Naive thymus-derived CD8-positive, alpha-beta T cell (primary cell): ENCODE measurements at regions of chr7 and their contacts with region 1.

Region 1: DNA sequence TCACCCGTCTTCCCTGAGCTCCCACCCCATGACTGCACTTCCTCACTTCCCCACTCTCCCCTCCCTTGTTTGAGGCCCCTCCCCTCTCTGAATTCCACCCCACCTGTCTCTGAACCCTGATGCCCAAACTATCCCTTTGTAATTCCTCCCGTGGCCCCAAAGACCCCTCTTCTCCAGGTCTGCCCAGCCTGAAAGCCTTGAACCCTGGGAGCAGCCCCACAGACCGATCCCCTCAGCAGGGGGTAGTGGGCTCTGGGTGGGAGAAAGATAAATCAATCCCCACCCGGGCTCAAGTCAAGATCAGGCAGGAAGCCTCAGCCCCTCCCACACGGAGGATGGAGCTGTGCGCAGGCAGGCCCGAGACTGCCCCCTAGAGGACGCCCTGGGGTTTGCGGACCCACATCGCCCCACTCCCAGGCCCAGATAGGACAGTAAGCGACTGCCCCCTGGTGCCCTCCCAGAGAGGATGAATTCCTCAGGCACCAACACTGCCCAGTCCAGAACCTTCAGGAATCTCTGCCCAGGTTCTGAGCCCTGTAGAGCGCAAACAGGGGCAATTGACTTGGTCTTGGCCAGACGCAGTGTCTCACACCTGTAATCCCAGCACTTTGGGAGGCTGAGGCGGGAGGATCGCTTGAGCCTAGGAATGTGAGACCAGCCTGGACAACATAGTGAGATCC is 11.7 kb downstream of the HSPB1 start:
- DNase-seq: peak; percentile 89 to 97 (median 95)
- ATAC-seq: peak; percentile 50 to 62
- H3K4me3 Mint-ChIP-seq: peak overlapping the region in 6 of 10 donors; percentile 14 to 61 (median 40)
- H3K27ac Mint-ChIP-seq: peak overlapping the region in 3 of 10 donors; percentile 6 to 67 (median 48)
- H3K4me1 Mint-ChIP-seq: peaks cover 17 to 30% (median 23%) of the 10 kb centered on the region in 4 donors
- H3K27me3 Mint-ChIP-seq: no peaks in the 10 kb centered on the region

Region 2: DNA sequence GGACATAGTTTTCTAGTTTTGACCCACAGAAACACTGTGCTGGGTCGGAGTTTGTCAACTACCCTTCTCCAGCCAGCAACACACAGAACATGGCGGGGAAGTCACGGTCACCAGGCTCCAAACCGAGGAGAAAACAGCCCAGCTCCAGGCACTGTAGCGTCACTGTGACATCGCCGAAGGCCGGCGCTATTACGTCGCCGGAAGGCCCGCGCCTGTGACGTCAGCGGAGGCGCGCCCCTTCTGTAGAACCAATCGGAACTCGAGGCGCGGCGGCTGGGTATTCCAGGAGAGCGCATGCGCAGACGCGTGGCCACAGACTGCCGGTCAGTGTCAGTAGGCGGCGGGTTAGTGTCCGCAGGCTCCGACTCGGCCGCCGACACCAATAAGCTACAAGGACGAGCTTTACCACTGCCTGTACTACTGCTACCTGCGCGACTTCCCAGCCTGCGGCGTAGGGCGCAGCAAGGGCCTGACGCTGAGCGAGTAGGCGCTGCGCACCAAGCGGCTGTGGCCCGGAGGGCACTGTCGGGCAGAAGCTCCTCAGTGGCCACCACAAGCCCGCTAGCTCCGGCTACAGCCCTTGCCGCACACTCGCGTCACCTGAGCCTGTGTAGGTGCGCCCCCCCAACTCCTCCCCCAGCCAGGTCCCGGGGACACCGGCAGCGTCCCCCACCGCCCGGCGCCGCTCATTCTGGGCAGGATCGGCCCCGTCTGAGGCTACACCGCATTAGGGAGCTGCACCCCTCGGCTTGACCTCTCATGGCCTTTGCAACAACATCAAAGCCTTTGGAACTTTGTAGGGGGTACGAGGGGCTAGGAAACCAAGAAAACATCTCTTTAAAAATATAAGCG is 147.6 kb before region 1 on chr7:
- POLR2A ChIA-PET with region 1: interaction called, 15 read pairs
- DNase-seq: peak; percentile 86 to 96 (median 92)
- ATAC-seq: peak; percentile 90 to 94
- H3K4me3 Mint-ChIP-seq: peak overlapping the region; percentile 83 to 94 (median 89)
- H3K27ac Mint-ChIP-seq: peak overlapping the region; percentile 84 to 98 (median 98)
- H3K4me1 Mint-ChIP-seq: peaks cover 0 to 10% (median 2%) of the 10 kb centered on the region in 4 donors
- H3K27me3 Mint-ChIP-seq: no peaks in the 10 kb centered on the region

Region 3: DNA sequence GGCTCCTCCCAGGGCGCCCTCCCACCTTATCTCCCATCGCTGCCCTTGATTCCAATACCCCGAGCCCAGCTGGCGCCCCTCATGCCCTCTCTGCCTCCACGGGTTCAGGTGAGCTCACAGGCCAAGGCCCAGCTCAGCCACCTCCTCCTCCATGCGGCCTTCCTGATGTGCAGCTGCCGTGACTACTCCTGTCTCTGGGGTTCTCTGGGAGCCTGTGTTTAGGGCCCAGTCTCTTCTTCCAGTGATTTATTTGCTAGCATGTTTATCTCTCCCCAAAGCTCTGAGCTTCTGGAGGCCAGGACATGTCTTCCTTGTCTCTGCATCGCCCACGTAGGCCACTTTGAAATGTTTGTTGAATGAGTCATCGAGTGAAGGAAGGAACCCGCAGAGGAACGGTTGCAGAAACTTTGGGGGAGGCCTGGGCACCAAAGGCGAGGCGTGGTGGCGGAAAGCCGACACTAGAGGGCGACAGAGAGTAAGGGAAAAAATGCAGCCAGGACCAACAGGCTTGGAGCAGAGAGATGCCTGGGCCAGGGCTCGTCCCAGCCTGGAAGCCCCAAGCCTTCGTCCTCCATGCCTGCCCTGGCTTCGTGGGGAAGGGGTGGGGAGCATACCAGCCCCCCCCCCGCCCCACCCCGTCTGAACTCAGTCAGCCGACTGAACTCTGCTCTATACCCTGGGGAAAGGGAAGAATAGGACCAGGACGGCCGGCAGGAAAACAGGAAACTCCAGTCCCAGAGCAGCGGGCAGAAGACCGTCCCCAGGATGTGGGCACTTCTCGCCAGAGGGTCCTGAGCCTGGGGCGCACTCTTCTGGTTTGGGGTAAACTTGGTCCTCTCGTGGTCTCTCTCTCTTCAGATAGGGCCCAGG is 22.6 kb before region 1 on chr7:
- POLR2A ChIA-PET with region 1: interaction called, 17 read pairs
- DNase-seq: peak; percentile 69 to 89 (median 80)
- ATAC-seq: peak; percentile 92 to 94
- H3K4me3 Mint-ChIP-seq: no peak overlapping the region
- H3K27ac Mint-ChIP-seq: peak overlapping the region in 5 of 10 donors; percentile 6 to 62 (median 34)
- H3K4me1 Mint-ChIP-seq: peaks cover 4 to 10% (median 8%) of the 10 kb centered on the region in 4 donors
- H3K27me3 Mint-ChIP-seq: no peaks in the 10 kb centered on the region

Region 4: DNA sequence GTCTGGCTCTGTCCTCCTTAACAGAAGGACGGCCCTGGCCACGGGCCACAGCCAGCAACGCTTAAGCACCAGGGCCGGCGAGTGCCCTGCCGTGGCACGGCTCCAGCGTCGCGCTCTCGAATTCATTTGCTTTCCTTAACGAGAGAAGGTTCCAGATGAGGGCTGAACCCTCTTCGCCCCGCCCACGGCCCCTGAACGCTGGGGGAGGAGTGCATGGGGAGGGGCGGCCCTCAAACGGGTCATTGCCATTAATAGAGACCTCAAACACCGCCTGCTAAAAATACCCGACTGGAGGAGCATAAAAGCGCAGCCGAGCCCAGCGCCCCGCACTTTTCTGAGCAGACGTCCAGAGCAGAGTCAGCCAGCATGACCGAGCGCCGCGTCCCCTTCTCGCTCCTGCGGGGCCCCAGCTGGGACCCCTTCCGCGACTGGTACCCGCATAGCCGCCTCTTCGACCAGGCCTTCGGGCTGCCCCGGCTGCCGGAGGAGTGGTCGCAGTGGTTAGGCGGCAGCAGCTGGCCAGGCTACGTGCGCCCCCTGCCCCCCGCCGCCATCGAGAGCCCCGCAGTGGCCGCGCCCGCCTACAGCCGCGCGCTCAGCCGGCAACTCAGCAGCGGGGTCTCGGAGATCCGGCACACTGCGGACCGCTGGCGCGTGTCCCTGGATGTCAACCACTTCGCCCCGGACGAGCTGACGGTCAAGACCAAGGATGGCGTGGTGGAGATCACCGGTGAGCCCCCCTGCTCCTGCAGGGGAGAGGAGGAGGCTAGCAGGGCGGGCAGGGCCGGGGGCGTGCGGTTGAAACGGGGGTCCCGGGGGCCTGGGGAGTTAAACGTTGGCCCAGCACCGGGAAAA is 11.6 kb before region 1 on chr7 and contains the start of gene HSPB1:
- POLR2A ChIA-PET with region 1: interaction called, 22 read pairs
- DNase-seq: peak in 9 of 10 donors; percentile 36 to 73 (median 44)
- ATAC-seq: peak; percentile 46 to 52
- H3K4me3 Mint-ChIP-seq: peak within 1 kb of the TSS; percentile 90 to 99 (median 92)
- H3K27ac Mint-ChIP-seq: peak within 1 kb of the TSS; percentile 85 to 95 (median 92)
- H3K4me1 Mint-ChIP-seq: peaks cover 11 to 23% (median 19%) of the 10 kb centered on the region in 4 donors
- H3K27me3 Mint-ChIP-seq: no peaks in the 10 kb centered on the region
- polyA plus RNA-seq, gene HSPB1: 96.4 to 128 (median 125) TPM

Region 5: GRCh38 chr7:76359111-76359978 is 45.2 kb after region 1 on chr7:
- POLR2A ChIA-PET with region 1: interaction called, 34 read pairs
- DNase-seq: peak; percentile 90 to 98 (median 96)
- ATAC-seq: peak; percentile 93 to 94
- H3K4me3 Mint-ChIP-seq: peak overlapping the region; percentile 86 to 99 (median 90)
- H3K27ac Mint-ChIP-seq: peak overlapping the region; percentile 70 to 98 (median 94)
- H3K4me1 Mint-ChIP-seq: peaks cover 18 to 47% (median 43%) of the 10 kb centered on the region in 4 donors
- H3K27me3 Mint-ChIP-seq: no peaks in the 10 kb centered on the region

Region 6: DNA sequence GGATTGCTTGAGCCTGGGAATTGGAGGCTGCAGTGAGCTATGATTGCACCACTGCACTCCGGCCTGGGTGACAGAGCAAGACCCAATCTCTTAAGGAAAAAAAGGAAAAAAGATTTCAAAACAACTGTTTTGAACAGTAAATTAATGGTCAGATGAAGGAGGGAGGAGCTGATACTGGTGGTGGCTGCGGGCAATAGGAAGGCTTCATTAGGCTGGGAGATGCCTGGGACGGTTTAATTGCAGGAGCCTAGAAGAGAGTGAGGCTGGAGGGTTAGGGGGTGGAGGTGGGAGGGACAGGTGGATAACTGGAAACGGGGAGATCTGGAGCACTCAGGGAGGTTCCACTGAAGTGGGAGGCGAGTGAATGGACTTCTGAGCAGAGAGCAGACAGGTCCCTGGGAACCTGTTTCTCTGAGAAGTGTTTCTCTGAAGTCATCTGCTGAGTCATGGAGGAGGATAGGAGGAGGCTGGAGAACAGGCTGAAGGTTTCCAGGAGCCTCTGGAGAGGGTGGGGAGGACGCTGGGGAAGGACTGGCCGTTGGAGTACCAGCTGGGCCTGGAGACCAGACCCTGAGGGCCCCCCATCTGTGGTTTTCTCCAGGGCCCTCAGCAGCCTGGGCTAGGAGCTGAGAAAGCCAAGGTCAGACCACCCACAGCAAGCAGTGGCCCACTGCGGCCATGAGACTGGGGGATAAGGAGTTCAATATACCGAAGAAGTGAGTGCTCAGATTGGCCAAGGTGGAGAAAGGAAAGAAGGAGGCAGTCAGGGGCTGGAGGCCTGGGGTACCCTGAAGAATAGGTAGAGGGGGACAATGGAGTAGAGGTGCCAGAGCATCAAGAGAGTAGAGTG is 59.0 kb after region 1 on chr7:
- POLR2A ChIA-PET with region 1: interaction called, 10 read pairs
- DNase-seq: no peak
- ATAC-seq: no peak
- H3K4me3 Mint-ChIP-seq: no peak overlapping the region
- H3K27ac Mint-ChIP-seq: peak overlapping the region in 3 of 10 donors; percentile 41 to 55 (median 43)
- H3K4me1 Mint-ChIP-seq: peaks cover 0 to 2% (median 0%) of the 10 kb centered on the region in 4 donors
- H3K27me3 Mint-ChIP-seq: peaks cover 0 to 22% (median 9%) of the 10 kb centered on the region in 5 donors

Region 7: GRCh38 chr7:76428868-76429760 is 114.9 kb after region 1 on chr7:
- POLR2A ChIA-PET with region 1: no interaction called
- DNase-seq: peak in 1 of 10 donors; percentile 6
- ATAC-seq: no peak
- H3K4me3 Mint-ChIP-seq: no peak overlapping the region
- H3K27ac Mint-ChIP-seq: peak overlapping the region in 1 of 10 donors; percentile 66
- H3K4me1 Mint-ChIP-seq: peaks cover 0 to 6% (median 2%) of the 10 kb centered on the region in 4 donors
- H3K27me3 Mint-ChIP-seq: peaks cover 0 to 3% (median 0%) of the 10 kb centered on the region in 5 donors